Sciatic nerve (tissue), 2 donors: ENCODE measurements at regions of chr16 and their contacts with region 1.

Region 1: DNA sequence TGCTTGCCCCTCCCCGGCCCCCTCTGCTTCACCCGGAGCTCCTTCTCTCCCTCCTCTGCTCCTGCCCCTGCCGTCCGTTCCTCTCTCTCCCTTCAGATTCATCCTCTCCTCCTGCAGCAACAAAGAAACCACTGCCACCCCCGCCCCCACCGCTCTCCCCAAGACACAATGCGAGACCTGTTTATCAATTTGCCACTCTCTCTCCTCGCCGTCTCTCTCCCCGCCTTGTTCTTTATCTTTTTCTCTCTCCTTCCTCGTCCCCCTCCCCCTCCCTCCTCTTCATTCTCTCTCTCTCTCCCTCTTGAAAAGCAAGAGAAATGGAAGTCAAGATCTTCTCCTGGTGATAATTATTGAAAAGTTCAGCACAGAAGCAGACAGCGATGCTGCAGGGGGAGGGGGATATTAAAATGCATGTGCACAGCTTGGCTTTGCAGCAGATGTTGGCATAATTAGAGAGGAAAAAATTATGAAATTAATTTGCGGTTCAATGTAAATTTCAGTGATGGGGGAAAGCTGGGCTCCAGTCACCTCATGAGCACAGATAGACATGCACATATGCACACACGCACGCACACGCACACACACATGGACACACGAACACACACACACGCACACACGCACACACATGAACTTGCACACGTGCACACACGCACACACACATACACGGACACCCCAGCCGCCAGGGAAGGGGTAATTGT is 58.1 kb upstream of the CBFA2T3 start:
- DNase-seq: no peak
- ATAC-seq: no peak

Region 2: GRCh38 chr16:88886845-88887521 is 148.1 kb before region 1 on chr16:
- intact Hi-C with region 1: no loop called
- DNase-seq: peak; percentile 73
- ATAC-seq: peak; percentile 75

Region 3: GRCh38 chr16:89055894-89056555 is 20.9 kb after region 1 on chr16:
- intact Hi-C with region 1: loop called (anchors 1 kb)
- DNase-seq: no peak
- ATAC-seq: no peak